Thyroid gland (tissue), 4 donors: ENCODE measurements at regions of chr2 and their contacts with region 1.

Region 1: GRCh38 chr2:207974216-207974605 is 51.1 kb downstream of the PLEKHM3 start:
- DNase-seq: peak; percentile 78
- H3K4me3 ChIP-seq: no peak overlapping the region
- H3K27ac ChIP-seq: peak overlapping the region; percentile 76 to 86 (median 77)
- H3K4me1 ChIP-seq: peaks cover 40 to 43% of the 10 kb centered on the region in 2 donors
- H3K27me3 ChIP-seq: no peaks in the 10 kb centered on the region
- CTCF ChIP-seq: peak in 1 of 6 experiments; percentile 23
- POLR2A ChIP-seq: peak in 1 of 2 donors; percentile 59

Region 2: GRCh38 chr2:207769597-207770486 is 204.4 kb before region 1 on chr2 and contains the start of gene FZD5:
- intact Hi-C with region 1: loop called (anchors 10 kb)
- DNase-seq: peak; percentile 99
- H3K4me3 ChIP-seq: peak within 1 kb of the TSS; percentile 4 to 98 (median 93)
- H3K27ac ChIP-seq: peak within 1 kb of the TSS; percentile 93 to 94 (median 93)
- H3K4me1 ChIP-seq: peaks cover 23 to 33% of the 10 kb centered on the region in 2 donors
- H3K27me3 ChIP-seq: no peaks in the 10 kb centered on the region
- CTCF ChIP-seq: peak in 4 of 6 experiments; percentile 19 to 71 (median 60)
- POLR2A ChIP-seq: peak; percentile 83 to 99
- total RNA-seq, gene FZD5: 31.2 to 45.4 (median 41.5) TPM

Region 3: DNA sequence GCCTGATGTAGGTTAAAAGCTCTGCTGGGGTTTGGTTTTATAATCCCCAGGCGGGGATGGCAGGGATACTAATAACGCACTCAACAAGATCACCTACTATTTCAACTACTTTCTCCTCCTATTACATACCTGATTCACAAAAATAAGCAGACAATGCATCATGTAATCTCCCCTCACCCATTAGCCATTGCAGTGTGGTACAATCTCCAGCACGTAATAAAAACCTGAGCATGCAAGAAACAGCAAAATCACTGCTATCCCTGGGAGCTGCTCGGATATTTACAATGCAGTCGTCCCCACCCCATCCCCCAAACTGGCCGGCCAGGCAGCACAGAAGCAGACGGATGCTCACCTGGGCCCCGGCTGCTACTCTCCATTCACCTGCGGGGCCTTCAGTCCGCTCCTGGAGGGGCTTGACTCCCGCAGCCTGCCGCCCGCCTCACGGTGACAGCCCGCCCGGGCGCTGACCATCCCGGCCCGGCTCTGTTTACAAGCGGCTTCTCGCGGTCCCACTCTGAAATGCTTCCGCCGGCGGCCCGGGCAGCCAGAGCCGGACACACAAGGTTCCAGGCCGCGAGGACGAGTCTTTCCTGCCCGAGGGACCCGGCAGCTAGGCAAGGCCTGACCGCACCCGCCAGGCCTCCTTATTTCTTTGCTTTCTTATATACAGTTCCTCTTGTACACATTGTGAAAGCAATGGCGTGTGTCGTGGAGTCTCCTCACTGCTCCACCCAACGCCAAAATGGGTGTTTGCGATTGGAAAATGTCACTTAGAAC is 51.0 kb after region 1 on chr2 and contains the start of gene PLEKHM3:
- intact Hi-C with region 1: loop called (anchors 10 kb)
- DNase-seq: peak; percentile 82 to 83
- H3K4me3 ChIP-seq: peak within 1 kb of the TSS; percentile 90 to 97 (median 93)
- H3K27ac ChIP-seq: peak within 1 kb of the TSS; percentile 36 to 89 (median 88)
- H3K4me1 ChIP-seq: peaks cover 29 to 31% of the 10 kb centered on the region in 2 donors
- H3K27me3 ChIP-seq: no peaks in the 10 kb centered on the region
- CTCF ChIP-seq: peak in 1 of 6 experiments; percentile 25
- POLR2A ChIP-seq: peak in 1 of 2 donors; percentile 73
- total RNA-seq, gene PLEKHM3: 42.2 to 53.0 (median 44.5) TPM